CD4-positive, alpha-beta memory T cell (primary cell): ENCODE measurements at regions of chr11 and their contacts with region 1.

Region 1: GRCh38 chr11:47269002-47269828 is 718 bp upstream of the MADD start:
- DNase-seq: peak; percentile 84 to 90 (median 87)
- H3K4me3 ChIP-seq: peak overlapping the region; percentile 59 to 90
- H3K4me3 Mint-ChIP-seq: peak overlapping the region; percentile 87 to 95 (median 92)
- H3K27ac ChIP-seq: peak overlapping the region; percentile 79
- H3K27ac Mint-ChIP-seq: peak overlapping the region; percentile 94 to 100 (median 96)
- H3K4me1 ChIP-seq: peaks cover 53% of the 10 kb centered on the region
- H3K4me1 Mint-ChIP-seq: peaks cover 41 to 60% (median 52%) of the 10 kb centered on the region in 4 donors
- H3K27me3 ChIP-seq: no peaks in the 10 kb centered on the region
- H3K27me3 Mint-ChIP-seq: no peaks in the 10 kb centered on the region

Region 2: DNA sequence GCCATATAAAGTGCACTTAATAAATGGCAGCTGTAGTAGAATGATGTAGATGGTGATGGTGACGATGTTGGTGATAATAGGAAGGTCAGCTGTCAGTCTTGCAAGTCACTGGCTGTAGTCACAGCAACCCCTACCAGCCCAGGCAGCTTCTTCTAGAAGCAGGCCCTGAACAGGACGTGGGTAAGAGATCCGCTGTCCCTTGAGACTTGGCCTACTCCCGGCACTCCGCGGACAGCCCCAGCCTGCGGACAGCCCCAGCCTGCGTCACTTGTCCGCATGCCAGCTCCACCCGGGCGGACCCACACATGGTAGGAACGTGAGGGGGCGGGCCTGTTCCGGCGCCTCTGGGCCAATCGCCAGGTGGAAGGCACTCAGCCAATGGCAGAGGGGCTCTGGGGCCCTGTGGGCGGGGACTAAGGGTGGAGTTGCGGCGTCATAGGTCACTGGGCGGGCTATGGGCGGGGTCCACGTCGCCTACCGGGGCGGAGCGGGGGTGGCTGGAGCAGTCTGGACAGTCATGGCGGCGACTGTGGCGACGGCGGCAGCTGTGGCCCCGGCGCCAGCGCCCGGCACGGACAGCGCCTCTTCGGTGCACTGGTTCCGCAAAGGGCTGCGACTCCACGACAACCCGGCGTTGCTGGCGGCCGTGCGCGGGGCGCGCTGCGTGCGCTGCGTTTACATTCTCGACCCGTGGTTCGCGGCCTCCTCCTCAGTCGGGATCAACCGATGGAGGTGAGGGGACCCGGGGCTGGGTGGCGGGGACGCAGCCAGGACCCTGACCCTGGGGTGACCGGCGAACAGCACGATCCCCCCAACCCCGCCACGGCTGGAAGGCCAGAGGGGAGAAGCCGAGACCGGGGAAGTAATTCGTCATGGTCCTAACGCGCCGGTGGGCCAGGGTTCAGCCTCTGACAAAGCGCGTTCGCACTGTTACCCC is 1422.0 kb before region 1 on chr11 and contains the start of gene CRY2:
- CTCF ChIA-PET with region 1: no interaction called
- POLR2A ChIA-PET with region 1: no interaction called
- intact Hi-C with region 1: loop called (anchors 10 kb)
- DNase-seq: peak; percentile 98
- H3K4me3 ChIP-seq: peak within 1 kb of the TSS; percentile 80 to 86
- H3K4me3 Mint-ChIP-seq: peak within 1 kb of the TSS; percentile 81 to 97 (median 87)
- H3K27ac ChIP-seq: peak within 1 kb of the TSS; percentile 96
- H3K27ac Mint-ChIP-seq: peak within 1 kb of the TSS; percentile 96 to 100 (median 97)
- H3K4me1 ChIP-seq: peaks cover 43% of the 10 kb centered on the region
- H3K4me1 Mint-ChIP-seq: peaks cover 27 to 68% (median 50%) of the 10 kb centered on the region in 4 donors
- H3K27me3 ChIP-seq: no peaks in the 10 kb centered on the region
- H3K27me3 Mint-ChIP-seq: no peaks in the 10 kb centered on the region
- total RNA-seq, gene CRY2: 66.0 to 67.4 TPM

Region 3: DNA sequence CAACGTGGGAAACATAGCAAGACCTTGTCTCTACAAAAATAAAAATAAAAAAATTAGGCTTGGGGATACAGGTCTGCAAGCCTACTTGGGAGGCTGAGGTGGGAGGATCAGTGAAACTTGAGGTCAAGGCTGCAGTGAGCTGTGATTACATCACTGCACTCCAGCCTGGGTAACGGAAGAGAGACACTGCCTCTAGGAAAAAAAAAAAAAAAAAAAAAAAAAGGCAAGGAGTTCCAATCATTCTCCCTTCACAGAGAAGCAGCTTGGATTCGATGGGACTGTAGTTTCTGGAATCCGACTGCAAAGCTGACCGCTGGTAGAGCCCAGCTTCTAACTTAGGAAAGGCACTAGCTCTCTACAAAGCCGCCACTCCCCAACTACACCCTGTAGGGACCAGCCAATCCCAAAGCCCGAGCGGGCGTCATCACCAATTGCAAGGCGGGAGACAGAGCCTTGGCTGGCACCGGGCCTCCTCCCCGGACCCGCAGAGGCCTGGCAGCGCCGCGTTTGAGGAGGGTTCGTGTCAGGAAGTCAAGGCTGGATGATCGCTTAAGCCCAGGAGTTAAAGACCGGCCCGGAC is 55.1 kb before region 1 on chr11:
- CTCF ChIA-PET with region 1: interaction called, 9 read pairs
- POLR2A ChIA-PET with region 1: interaction called, 57 read pairs
- intact Hi-C with region 1: loop called (anchors 1 kb)
- DNase-seq: peak; percentile 79 to 88 (median 80)
- H3K4me3 ChIP-seq: peak overlapping the region; percentile 57 to 95
- H3K4me3 Mint-ChIP-seq: peak overlapping the region; percentile 99 to 100 (median 99)
- H3K27ac ChIP-seq: peak overlapping the region; percentile 81
- H3K27ac Mint-ChIP-seq: peak overlapping the region; percentile 98 to 100 (median 99)
- H3K4me1 ChIP-seq: peaks cover 37% of the 10 kb centered on the region
- H3K4me1 Mint-ChIP-seq: peaks cover 23 to 39% (median 28%) of the 10 kb centered on the region in 4 donors
- H3K27me3 ChIP-seq: no peaks in the 10 kb centered on the region
- H3K27me3 Mint-ChIP-seq: no peaks in the 10 kb centered on the region

Region 4: DNA sequence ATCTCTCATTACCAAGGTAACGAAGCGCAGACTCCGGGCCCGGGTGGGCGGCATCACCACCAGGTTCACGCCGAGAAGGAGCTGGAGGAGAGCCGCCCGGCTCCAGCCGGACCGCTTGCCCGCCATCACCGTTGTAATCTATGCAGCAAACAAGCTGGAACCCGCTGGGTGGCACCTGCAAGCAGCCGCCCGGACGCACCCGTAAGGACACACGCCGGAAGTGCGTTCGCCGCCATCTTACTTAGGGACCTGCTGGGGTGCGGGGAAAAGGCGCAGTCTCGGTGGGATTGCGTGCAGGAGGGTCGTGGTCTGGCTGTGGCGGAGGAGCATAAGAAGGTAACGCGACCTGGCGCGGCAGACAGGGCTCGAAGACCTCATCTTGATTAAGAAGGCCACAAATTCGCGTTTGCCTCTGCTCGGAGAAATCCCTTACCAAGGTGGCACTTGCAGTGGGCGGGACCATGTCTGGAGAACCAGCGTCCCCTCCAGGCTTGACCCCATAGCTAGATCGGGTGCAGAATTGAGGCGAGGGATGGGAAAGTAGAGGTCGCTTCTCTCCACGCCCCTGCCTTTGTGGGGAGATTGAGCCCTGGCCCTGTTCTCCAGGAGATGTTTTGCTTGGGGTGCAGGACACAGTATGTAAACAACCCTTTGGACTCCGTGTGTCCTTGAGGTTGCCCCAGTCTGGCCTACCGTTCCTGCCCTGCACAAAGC is 20.4 kb before region 1 on chr11 and contains the start of gene ACP2:
- CTCF ChIA-PET with region 1: interaction called, 21 read pairs
- POLR2A ChIA-PET with region 1: interaction called, 35 read pairs
- intact Hi-C with region 1: loop called (anchors 1 kb)
- DNase-seq: peak; percentile 87 to 90 (median 87)
- H3K4me3 ChIP-seq: peak within 1 kb of the TSS; percentile 89 to 94
- H3K4me3 Mint-ChIP-seq: peak within 1 kb of the TSS; percentile 99 to 100 (median 99)
- H3K27ac ChIP-seq: peak within 1 kb of the TSS; percentile 75
- H3K27ac Mint-ChIP-seq: peak within 1 kb of the TSS; percentile 91 to 99 (median 99)
- H3K4me1 ChIP-seq: peaks cover 20% of the 10 kb centered on the region
- H3K4me1 Mint-ChIP-seq: peaks cover 12 to 29% (median 20%) of the 10 kb centered on the region in 4 donors
- H3K27me3 ChIP-seq: no peaks in the 10 kb centered on the region
- H3K27me3 Mint-ChIP-seq: no peaks in the 10 kb centered on the region
- total RNA-seq, gene ACP2: 23.6 to 23.7 TPM

Region 5: DNA sequence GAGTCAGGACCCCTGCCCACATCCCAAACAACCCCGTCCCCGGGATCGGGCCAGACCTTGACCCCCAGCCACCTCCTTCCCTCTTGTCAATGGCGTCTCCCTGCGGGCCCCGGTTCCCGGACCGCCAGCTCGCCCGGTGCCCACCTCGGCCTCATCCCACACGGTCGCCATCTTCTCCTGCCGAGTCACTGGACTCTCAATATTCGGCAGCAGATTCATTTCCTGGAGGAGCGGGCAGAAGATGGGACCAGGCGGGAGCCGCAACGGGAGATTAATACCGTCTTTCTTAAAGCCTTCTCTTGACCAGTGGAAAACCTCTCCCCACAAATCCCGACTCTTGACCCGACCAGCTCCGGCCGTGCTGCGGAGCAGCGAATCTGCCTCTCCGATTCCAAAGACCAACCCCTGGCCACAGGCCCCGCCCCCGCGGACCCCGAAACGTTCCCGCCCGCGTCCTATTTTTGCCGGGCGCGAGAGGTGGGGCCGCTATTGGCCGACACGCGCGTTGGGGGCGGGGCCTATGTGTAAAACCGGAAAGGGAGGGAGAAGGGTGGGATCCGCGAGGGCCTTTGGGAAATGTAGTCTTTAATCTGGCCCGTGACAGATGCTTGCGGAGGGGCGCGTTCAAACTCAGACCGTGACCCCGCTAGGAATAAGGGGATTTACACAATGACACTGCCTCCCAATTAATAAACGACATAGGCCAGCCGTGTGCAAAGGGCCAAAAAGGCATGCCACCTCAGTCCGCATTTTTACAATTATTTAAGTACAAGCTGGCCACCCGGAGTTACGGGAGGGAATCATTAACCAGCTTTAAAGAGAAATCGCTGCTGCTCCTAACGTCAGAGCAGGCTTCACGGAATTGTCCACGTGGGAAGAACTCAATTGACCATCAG is 157.1 kb after region 1 on chr11 and contains the start of gene PSMC3:
- CTCF ChIA-PET with region 1: no interaction called
- POLR2A ChIA-PET with region 1: interaction called, 4 read pairs
- intact Hi-C with region 1: loop called (anchors 1 kb)
- DNase-seq: peak; percentile 94 to 97 (median 96)
- H3K4me3 ChIP-seq: peak within 1 kb of the TSS; percentile 64 to 91
- H3K4me3 Mint-ChIP-seq: peak within 1 kb of the TSS; percentile 99 to 100 (median 100)
- H3K27ac ChIP-seq: peak within 1 kb of the TSS; percentile 85
- H3K27ac Mint-ChIP-seq: peak within 1 kb of the TSS; percentile 92 to 99 (median 99)
- H3K4me1 ChIP-seq: peaks cover 18% of the 10 kb centered on the region
- H3K4me1 Mint-ChIP-seq: peaks cover 12 to 32% (median 22%) of the 10 kb centered on the region in 4 donors
- H3K27me3 ChIP-seq: no peaks in the 10 kb centered on the region
- H3K27me3 Mint-ChIP-seq: no peaks in the 10 kb centered on the region
- total RNA-seq, gene PSMC3: 53.9 to 59.6 TPM